ENCODE measurements at regions of chr6 and their contacts with region 1.

Region 1: DNA sequence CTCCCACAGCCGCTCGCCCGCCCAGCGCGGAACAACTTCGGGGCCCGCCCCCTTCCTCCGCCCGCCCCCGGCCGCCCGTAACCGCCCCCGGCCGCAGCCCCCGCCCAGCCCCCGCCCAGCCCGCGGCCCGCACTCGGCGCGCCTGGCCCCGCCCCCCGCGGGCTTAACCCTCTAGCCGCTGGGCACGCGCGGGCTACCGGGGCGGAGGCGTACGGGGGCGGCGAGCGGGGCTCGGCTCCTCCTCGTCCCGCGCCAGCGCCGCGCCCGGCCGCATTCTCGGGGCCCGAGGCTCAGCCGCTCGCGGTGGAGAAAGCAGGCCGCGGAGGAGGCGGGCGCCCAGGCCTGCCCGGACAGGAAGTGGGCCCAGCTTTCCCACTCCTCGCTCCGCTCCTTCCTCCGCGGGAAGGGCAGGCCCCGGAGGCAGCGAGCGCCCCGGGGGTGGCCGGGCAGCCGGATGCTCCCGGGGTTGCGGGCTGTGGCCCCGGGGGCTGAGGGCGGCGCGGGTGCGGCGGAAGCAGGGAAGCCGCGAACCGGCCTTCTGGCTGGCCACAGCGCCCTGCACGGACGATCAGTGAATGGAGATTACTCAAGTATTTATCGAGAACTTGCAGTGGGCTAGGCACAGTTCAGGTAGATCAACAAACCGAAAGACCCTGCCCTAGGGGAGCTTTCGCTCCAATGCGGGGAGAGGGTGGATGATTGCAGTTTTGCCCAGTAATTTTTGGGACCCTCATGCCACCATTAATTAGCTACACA is at the start of gene TRAM2:
- DNase-seq: peak; percentile 27
- H3K4me3 ChIP-seq: peak within 1 kb of the TSS; percentile 72 to 91 (median 86)
- H3K27ac ChIP-seq: peak within 1 kb of the TSS; percentile 88 to 100 (median 98)
- H3K4me1 ChIP-seq: peaks cover 0 to 58% (median 37%) of the 10 kb centered on the region in 3 donors
- H3K27me3 ChIP-seq: no peaks in the 10 kb centered on the region
- CTCF ChIP-seq: peak in 1 of 6 experiments; percentile 21
- POLR2A ChIP-seq: peak in 2 of 4 donors; percentile 60 to 74
- total RNA-seq, gene TRAM2: 2.3 to 8.6 (median 5.3) TPM

Region 2: GRCh38 chr6:52503848-52504781 is 73.1 kb before region 1 on chr6:
- intact Hi-C with region 1: loop called (anchors 5 kb)
- DNase-seq: peak; percentile 41
- H3K4me3 ChIP-seq: peak overlapping the region in 3 of 4 donors; percentile 8 to 45 (median 12)
- H3K27ac ChIP-seq: peak overlapping the region; percentile 57 to 85 (median 73)
- H3K4me1 ChIP-seq: peaks cover 19 to 55% (median 29%) of the 10 kb centered on the region in 3 donors
- H3K27me3 ChIP-seq: peaks cover 0 to 54% (median 0%) of the 10 kb centered on the region in 4 donors
- CTCF ChIP-seq: no peak
- POLR2A ChIP-seq: no peak

Region 3: GRCh38 chr6:52801188-52801841 is 224.1 kb after region 1 on chr6:
- intact Hi-C with region 1: no loop called
- DNase-seq: no peak
- H3K4me3 ChIP-seq: no peak overlapping the region
- H3K27ac ChIP-seq: no peak overlapping the region
- H3K4me1 ChIP-seq: no peaks in the 10 kb centered on the region
- H3K27me3 ChIP-seq: no peaks in the 10 kb centered on the region
- CTCF ChIP-seq: no peak
- POLR2A ChIP-seq: no peak